ENCODE measurements at regions of chr13 and their contacts with region 1.

Region 1: DNA sequence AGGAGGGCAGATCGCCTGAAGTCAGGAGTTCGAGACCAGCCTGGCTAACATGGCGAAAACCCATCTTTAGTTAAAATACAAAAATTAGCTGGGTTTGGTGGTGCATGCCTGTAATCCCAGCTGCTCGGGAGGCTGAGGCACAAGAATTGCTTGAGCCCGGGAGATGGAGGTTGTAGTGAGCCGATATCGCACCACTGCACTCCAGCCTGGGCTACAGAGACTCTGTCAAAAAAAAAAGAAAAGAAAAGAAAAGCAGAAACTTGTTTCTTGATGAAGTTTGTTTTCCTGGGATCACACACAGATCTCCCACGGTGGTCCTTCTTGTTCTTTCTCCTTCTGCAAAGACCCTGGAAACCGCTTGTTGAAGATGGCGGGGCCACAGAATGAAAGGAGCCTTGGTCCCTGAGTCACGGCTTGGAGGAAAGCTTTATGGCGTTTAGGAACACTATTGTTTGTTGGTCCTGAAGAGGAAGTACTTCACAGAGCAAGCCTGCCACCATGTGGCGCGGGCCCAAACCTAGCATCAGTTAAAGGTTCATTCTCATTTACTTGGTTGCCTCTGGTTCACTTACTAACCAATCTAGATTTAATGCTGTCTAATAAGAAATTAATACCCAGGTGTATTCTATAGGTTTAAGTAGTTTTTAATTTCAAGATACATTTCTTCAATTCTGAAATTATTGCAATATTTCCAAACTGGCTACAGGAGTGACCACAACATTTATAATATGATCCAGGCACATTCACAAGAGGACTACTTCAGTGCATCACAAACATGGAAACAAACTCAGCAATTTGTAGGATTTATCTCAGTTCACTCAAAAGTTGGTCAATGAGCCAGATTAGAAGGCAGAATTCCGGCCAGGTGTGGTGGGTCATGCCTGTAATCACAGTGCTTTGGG is 21.3 kb upstream of the ARL11 start:
- DNase-seq: peak; percentile 87
- H3K4me3 ChIP-seq: peak overlapping the region; percentile 57
- H3K27ac ChIP-seq: peak overlapping the region; percentile 22
- H3K4me1 ChIP-seq: no peaks in the 10 kb centered on the region
- H3K27me3 ChIP-seq: no peaks in the 10 kb centered on the region
- CTCF ChIP-seq: peak; percentile 90

Region 2: GRCh38 chr13:49071341-49071937 is 535.6 kb before region 1 on chr13:
- intact Hi-C with region 1: no loop called
- DNase-seq: no peak
- H3K4me3 ChIP-seq: no peak overlapping the region
- H3K27ac ChIP-seq: no peak overlapping the region
- H3K4me1 ChIP-seq: peaks cover 23% of the 10 kb centered on the region
- H3K27me3 ChIP-seq: no peaks in the 10 kb centered on the region
- CTCF ChIP-seq: no peak

Region 3: GRCh38 chr13:49300739-49301589 is 306.0 kb before region 1 on chr13:
- intact Hi-C with region 1: loop called (anchors 5 kb)
- DNase-seq: no peak
- H3K4me3 ChIP-seq: peak overlapping the region; percentile 55
- H3K27ac ChIP-seq: peak overlapping the region; percentile 52
- H3K4me1 ChIP-seq: peaks cover 21% of the 10 kb centered on the region
- H3K27me3 ChIP-seq: no peaks in the 10 kb centered on the region
- CTCF ChIP-seq: peak; percentile 89

Region 4: DNA sequence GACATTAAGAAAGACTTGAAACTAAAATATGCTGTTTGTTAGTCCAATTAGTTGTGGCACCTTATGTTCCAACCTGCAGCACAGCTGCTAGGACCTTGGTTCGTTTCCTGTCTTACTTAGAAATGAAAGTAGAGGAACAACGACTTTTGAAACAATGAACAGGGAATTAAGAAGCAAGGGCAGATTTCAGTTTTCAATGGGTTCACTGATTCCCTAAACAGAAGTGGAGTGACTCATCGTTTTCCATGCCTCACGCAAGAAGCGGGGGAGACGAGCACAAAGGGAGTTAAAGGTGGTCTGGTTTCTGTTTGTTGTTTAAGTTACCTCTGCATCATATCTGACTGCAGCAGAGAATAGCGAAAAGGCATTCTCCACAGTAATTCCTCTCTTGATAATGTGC is 66.4 kb before region 1 on chr13:
- intact Hi-C with region 1: loop called (anchors 5 kb)
- DNase-seq: no peak
- H3K4me3 ChIP-seq: peak overlapping the region; percentile 38
- H3K27ac ChIP-seq: peak overlapping the region; percentile 67
- H3K4me1 ChIP-seq: peaks cover 27% of the 10 kb centered on the region
- H3K27me3 ChIP-seq: no peaks in the 10 kb centered on the region
- CTCF ChIP-seq: no peak

Region 5: DNA sequence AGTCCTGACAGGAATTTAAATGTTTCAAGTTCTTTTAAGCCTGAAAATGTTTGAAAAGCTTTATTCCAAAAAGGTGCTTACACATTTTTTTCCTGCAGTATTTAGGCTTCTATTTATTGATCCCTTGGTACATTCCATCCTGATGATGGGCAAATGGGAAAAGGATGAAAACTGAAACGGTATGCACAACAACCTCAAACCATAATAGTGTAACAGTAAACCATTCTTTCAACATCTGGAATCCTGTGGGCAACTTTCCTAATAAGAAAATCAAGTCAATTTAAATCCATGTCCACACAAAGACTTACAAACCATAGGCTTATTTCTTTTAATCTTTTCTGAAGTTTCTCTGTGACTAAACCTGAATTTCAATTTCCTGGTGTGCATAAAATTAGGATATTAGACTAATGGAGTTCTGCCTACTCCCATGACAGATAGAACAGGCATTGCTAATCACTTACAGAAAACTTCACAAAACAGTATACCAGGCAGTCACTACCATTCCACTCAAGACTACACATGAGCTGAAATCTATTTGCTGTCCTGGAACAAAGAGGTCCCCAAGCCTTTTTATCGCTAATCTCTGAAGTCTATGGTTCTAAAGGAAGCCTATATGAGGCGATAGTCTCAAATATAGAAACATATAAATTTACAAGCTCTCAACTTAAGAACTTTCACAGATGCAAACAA is 1133.2 kb after region 1 on chr13:
- intact Hi-C with region 1: no loop called
- DNase-seq: no peak
- H3K4me3 ChIP-seq: no peak overlapping the region
- H3K27ac ChIP-seq: no peak overlapping the region
- H3K4me1 ChIP-seq: no peaks in the 10 kb centered on the region
- H3K27me3 ChIP-seq: no peaks in the 10 kb centered on the region
- CTCF ChIP-seq: no peak

Measured in left ventricle myocardium inferior (tissue), 1 donor.